HAP-1 (cell line): ENCODE measurements at regions of chr14 and their contacts with region 1.

Region 1: GRCh38 chr14:65222440-65222858 is 120.1 kb upstream of the MAX start:
- DNase-seq: peak; percentile 41 to 76
- H3K4me3 ChIP-seq: no peak overlapping the region
- H3K4me1 ChIP-seq: peaks cover 36% of the 10 kb centered on the region
- H3K27me3 ChIP-seq: no peaks in the 10 kb centered on the region

Region 2: GRCh38 chr14:65403231-65403630 is 180.8 kb after region 1 on chr14:
- in situ Hi-C with region 1: loop called (anchors 10 kb)
- DNase-seq: no peak
- H3K4me3 ChIP-seq: no peak overlapping the region
- H3K4me1 ChIP-seq: no peaks in the 10 kb centered on the region
- H3K27me3 ChIP-seq: no peaks in the 10 kb centered on the region